H1 (cell line): ENCODE measurements at regions of chr12 and their contacts with region 1.

Region 1: GRCh38 chr12:118175823-118176447 is 40.0 kb downstream of the PEBP1 start:
- DNase-seq: no peak
- H3K4me3 ChIP-seq: no peak overlapping the region
- H3K27ac ChIP-seq: no peak overlapping the region
- H3K4me1 ChIP-seq: no peaks in the 10 kb centered on the region
- H3K27me3 ChIP-seq: no peaks in the 10 kb centered on the region
- CTCF ChIP-seq: no peak
- EP300 ChIP-seq: no peak
- POLR2A ChIP-seq: no peak
- RAD21 ChIP-seq: no peak

Region 2: DNA sequence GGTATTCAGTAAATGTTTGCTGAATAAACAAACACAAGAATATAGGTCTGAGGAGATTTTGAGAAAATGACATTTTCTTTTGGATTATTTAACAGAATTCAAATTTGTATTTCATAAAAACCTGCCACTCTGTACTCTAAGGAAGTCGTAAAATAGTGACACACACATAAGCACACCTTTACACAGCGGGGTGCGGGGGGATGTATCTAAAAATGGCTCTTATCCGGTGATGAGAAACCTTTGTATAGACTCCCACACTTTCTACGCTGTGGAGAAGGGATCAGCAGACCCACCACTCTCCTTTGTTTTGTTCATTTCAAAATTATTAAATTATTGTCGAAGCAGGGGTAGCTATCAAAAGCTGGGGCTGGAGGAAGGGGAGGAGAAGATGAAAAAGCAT is 18.0 kb after region 1 on chr12:
- CTCF ChIA-PET with region 1: interaction called, 13 read pairs
- POLR2A ChIA-PET with region 1: no interaction called
- DNase-seq: no peak
- H3K4me3 ChIP-seq: no peak overlapping the region
- H3K27ac ChIP-seq: no peak overlapping the region
- H3K4me1 ChIP-seq: peaks cover 0 to 4% (median 3%) of the 10 kb centered on the region in 4 experiments; a peak in 5 of 7 replicates
- H3K27me3 ChIP-seq: no peaks in the 10 kb centered on the region
- CTCF ChIP-seq: no peak
- EP300 ChIP-seq: no peak
- POLR2A ChIP-seq: no peak
- RAD21 ChIP-seq: no peak

Region 3: GRCh38 chr12:118377884-118378470 is 202.0 kb after region 1 on chr12:
- CTCF ChIA-PET with region 1: interaction called, 120 read pairs
- POLR2A ChIA-PET with region 1: no interaction called
- DNase-seq: peak in 1 of 2 experiments; percentile 86
- H3K4me3 ChIP-seq: peak overlapping the region; percentile 65 to 90 (median 68); a peak in 7 of 8 replicates
- H3K27ac ChIP-seq: no peak overlapping the region
- H3K4me1 ChIP-seq: peaks cover 2 to 9% (median 5%) of the 10 kb centered on the region in 4 experiments; a peak in 6 of 7 replicates
- H3K27me3 ChIP-seq: no peaks in the 10 kb centered on the region
- CTCF ChIP-seq: peak in 2 of 3 experiments; percentile 68 to 78; a peak in 3 of 4 replicates
- EP300 ChIP-seq: no peak
- POLR2A ChIP-seq: no peak
- RAD21 ChIP-seq: peak; percentile 22 to 56